WTC11 (cell line): ENCODE measurements at regions of chr5 and their contacts with region 1.

Region 1: GRCh38 chr5:150615141-150615699 is 25.2 kb upstream of the SYNPO start:
- DNase-seq: no peak
- ATAC-seq: no peak
- H3K4me3 Mint-ChIP-seq: no peak overlapping the region
- H3K27ac Mint-ChIP-seq: no peak overlapping the region
- H3K4me1 Mint-ChIP-seq: peaks cover 15% of the 10 kb centered on the region
- H3K27me3 Mint-ChIP-seq: no peaks in the 10 kb centered on the region
- CTCF ChIP-seq: no peak

Region 2: GRCh38 chr5:150553402-150553801 is 61.8 kb before region 1 on chr5:
- CTCF ChIA-PET with region 1: no interaction called
- POLR2A ChIA-PET with region 1: no interaction called
- DNase-seq: no peak
- ATAC-seq: no peak
- H3K4me3 Mint-ChIP-seq: no peak overlapping the region
- H3K27ac Mint-ChIP-seq: no peak overlapping the region
- H3K4me1 Mint-ChIP-seq: peaks cover 10% of the 10 kb centered on the region
- H3K27me3 Mint-ChIP-seq: no peaks in the 10 kb centered on the region
- CTCF ChIP-seq: no peak

Region 3: GRCh38 chr5:150582241-150583109 is 32.7 kb before region 1 on chr5:
- CTCF ChIA-PET with region 1: interaction called, 13 read pairs
- POLR2A ChIA-PET with region 1: no interaction called
- DNase-seq: no peak
- ATAC-seq: peak; percentile 43
- H3K4me3 Mint-ChIP-seq: no peak overlapping the region
- H3K27ac Mint-ChIP-seq: no peak overlapping the region
- H3K4me1 Mint-ChIP-seq: peaks cover 3% of the 10 kb centered on the region
- H3K27me3 Mint-ChIP-seq: no peaks in the 10 kb centered on the region
- CTCF ChIP-seq: no peak

Region 4: DNA sequence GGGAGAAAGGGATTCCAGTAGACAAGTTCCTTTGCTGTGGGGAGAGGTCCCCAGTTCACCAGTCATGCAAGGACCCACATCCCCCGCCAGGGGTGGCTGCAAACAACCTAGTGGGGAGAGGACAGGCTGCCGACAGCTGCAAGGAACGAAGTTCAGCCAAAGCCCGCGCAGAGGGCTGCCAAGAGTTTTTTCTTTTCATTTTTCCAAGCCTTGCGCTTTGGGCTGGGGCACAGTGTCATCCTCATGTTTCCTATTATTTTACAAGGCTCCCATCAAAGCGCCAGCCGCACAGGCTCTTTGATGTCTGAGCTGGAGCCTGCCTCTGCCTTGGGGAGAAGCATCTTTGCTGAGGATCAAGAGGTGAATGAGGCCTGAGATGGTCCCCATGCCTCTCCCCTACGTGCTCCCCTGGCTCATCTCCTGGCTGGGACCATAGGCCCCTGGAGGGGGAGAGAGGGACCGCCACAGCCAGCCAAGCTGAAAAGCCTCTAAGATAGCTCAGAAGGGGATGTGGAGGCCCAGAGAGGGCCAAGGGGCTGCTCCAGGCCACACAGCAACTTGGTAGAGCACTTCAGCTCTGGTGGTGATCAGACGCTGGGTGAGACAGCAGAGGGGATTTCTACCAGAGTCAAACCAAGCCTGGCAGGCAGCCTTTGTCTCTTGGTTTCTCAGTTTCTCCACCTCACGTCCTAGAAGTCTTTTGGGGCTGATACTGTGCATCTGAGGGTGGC is 25.2 kb before region 1 on chr5:
- CTCF ChIA-PET with region 1: interaction called, 14 read pairs
- POLR2A ChIA-PET with region 1: no interaction called
- DNase-seq: peak; percentile 64
- ATAC-seq: peak; percentile 84
- H3K4me3 Mint-ChIP-seq: no peak overlapping the region
- H3K27ac Mint-ChIP-seq: no peak overlapping the region
- H3K4me1 Mint-ChIP-seq: peaks cover 17% of the 10 kb centered on the region
- H3K27me3 Mint-ChIP-seq: no peaks in the 10 kb centered on the region; the same call in 1 of the 2 replicates
- CTCF ChIP-seq: no peak

Region 5: DNA sequence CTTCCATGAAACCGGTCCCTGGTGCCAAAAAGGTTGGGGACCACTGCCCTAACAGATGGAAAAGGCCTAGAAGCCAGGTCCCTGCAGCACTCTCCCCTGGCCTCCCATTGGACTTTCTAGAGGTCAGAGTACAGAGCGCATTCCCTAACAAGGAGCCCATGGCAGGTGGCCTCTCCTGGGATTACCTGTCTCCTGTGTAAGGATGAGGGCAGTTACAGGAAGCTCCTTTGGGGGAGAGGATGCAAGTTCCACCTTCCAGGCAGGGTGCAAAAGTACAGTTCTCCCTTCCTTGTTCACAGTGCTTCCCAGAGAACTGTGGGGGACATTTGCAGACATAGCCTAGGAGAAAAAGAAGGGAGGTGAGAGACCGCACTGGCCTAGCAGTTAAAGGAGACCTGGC is 894.6 kb after region 1 on chr5:
- CTCF ChIA-PET with region 1: no interaction called
- POLR2A ChIA-PET with region 1: no interaction called
- DNase-seq: no peak
- ATAC-seq: no peak
- H3K4me3 Mint-ChIP-seq: no peak overlapping the region
- H3K27ac Mint-ChIP-seq: no peak overlapping the region
- H3K4me1 Mint-ChIP-seq: no peaks in the 10 kb centered on the region
- H3K27me3 Mint-ChIP-seq: no peaks in the 10 kb centered on the region
- CTCF ChIP-seq: no peak